Colonic mucosa (tissue), 4 donors: ENCODE measurements at regions of chr7 and their contacts with region 1.

Region 1: GRCh38 chr7:54773472-54774399 is 14.7 kb upstream of the SEC61G start:
- DNase-seq: peak; percentile 87
- H3K4me3 ChIP-seq: peak overlapping the region; percentile 28
- H3K27ac ChIP-seq: no peak overlapping the region
- H3K4me1 ChIP-seq: no peaks in the 10 kb centered on the region
- H3K27me3 ChIP-seq: no peaks in the 10 kb centered on the region
- CTCF ChIP-seq: peak; percentile 72

Region 2: GRCh38 chr7:54864663-54865062 is 90.9 kb after region 1 on chr7:
- intact Hi-C with region 1: no loop called
- DNase-seq: no peak
- H3K4me3 ChIP-seq: no peak overlapping the region
- H3K27ac ChIP-seq: no peak overlapping the region
- H3K4me1 ChIP-seq: no peaks in the 10 kb centered on the region
- H3K27me3 ChIP-seq: no peaks in the 10 kb centered on the region
- CTCF ChIP-seq: no peak

Region 3: GRCh38 chr7:55415173-55415778 is 641.5 kb after region 1 on chr7:
- intact Hi-C with region 1: loop called (anchors 10 kb)
- DNase-seq: peak; percentile 83
- H3K4me3 ChIP-seq: no peak overlapping the region
- H3K27ac ChIP-seq: no peak overlapping the region
- H3K4me1 ChIP-seq: no peaks in the 10 kb centered on the region
- H3K27me3 ChIP-seq: no peaks in the 10 kb centered on the region
- CTCF ChIP-seq: peak; percentile 64

Region 4: DNA sequence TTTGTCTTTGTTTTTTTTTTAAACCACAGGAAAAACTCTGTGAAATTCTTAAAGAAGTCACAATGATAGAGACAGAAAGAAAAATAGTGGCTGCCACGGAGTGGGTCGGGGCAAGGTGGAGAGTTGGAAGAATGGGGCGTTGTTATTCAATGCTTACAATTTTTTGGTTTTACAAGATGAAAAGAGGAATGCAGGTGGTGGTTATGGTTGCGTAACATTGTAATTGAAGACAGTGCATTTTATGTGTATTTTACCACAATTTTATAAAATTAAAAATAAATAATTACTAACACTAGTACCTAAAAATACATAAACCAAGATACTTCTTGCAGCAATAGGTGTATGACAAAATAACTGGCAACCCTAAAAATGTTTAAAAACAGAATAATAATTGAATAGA is 875.5 kb after region 1 on chr7:
- intact Hi-C with region 1: loop called (anchors 5 kb)
- DNase-seq: no peak
- H3K4me3 ChIP-seq: no peak overlapping the region
- H3K27ac ChIP-seq: no peak overlapping the region
- H3K4me1 ChIP-seq: no peaks in the 10 kb centered on the region
- H3K27me3 ChIP-seq: no peaks in the 10 kb centered on the region
- CTCF ChIP-seq: no peak